ENCODE measurements at regions of chr16 and their contacts with region 1.

Region 1: DNA sequence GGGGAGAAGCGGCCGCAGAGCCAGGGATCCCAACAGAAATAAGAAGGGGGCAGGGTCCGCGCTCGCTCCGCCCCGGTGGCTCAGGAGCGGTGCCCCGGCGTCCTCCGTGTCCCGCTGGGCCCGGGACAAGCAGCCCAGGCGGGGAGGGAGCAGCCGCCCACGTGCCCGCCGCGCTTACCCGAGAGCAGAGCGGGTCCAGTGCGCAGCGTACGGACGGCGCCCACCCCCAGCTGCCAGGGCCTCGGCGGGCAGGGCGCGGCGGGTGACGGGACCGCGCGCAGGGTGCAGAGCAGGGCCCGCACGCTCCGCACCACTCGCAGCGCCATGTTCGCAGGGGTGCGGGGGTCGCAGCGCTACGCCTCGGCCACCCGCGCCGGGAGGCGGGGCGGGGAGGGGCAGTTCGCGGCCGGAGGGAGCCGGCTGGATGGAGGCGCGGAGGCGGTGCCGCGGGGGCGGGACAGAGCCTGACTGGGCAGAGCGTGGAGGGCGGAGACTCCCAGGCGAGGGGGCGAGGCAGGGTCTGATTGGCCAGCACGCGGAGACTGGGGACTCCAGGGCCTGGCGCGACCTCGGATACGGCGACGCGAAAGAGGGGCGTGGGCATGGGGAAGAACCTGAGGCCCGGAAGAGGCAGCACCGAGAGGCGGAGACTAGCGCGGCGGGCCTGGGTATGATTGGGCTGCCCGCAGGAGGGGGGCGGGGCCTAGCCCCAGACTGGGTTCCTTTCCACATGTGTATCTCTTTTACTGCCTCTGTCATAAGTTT is at the start of gene GCSH:
- DNase-seq: peak; percentile 97 to 100 (median 100)

Region 2: GRCh38 chr16:80997139-80997798 is 98.9 kb before region 1 on chr16:
- intact Hi-C with region 1: no loop called
- DNase-seq: no peak

Region 3: GRCh38 chr16:81077076-81077940 is 18.8 kb before region 1 on chr16 and contains the start of gene C16orf46:
- intact Hi-C with region 1: loop called (anchors 2 kb)
- DNase-seq: peak; percentile 97 to 100 (median 99)

Region 4: GRCh38 chr16:81158964-81159363 is 62.8 kb after region 1 on chr16:
- intact Hi-C with region 1: no loop called
- DNase-seq: peak in 41 of 42 donors; percentile 23 to 89 (median 68)

Region 5: GRCh38 chr16:81204798-81205680 is 108.9 kb after region 1 on chr16:
- intact Hi-C with region 1: loop called (anchors 10 kb)
- DNase-seq: peak in 31 of 42 donors; percentile 16 to 89 (median 63)

Region 6: DNA sequence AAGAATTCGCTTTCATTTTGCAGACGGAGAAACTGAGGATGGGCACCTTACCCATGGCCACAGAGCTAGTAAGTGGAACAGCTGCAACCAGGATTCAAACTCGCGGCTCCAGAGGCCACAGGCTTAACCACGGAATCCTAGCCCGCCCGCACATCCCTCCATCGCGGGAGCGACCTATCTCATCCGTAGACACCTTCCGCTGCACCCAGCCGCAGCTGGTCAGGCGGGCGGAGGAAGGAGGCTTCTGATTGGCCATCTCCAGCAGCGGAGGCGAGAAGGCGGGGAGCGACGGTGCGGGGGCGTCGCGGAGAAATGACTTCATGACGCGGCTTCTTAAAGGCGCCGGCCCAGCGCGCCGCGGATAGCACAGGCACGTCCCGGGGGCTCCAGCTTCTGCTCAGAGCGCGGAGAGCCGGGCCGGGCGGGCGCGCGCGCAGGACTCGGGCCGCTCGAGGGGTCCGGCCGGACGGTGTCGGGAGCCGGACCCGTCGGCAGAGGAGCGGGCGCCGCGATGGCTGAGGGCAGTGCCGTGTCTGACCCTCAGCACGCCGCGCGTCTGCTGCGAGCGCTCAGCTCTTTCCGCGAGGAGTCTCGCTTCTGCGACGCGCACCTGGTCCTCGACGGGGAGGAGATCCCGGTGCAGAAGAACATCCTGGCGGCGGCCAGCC is 218.6 kb after region 1 on chr16 and contains the start of gene GAN:
- intact Hi-C with region 1: loop called (anchors 10 kb)
- DNase-seq: peak; percentile 92 to 99 (median 97)

Measured in head of caudate nucleus (tissue), 42 donors.